Heart left ventricle (tissue), 16 donors: ENCODE measurements at regions of chr9 and their contacts with region 1.

Region 1: DNA sequence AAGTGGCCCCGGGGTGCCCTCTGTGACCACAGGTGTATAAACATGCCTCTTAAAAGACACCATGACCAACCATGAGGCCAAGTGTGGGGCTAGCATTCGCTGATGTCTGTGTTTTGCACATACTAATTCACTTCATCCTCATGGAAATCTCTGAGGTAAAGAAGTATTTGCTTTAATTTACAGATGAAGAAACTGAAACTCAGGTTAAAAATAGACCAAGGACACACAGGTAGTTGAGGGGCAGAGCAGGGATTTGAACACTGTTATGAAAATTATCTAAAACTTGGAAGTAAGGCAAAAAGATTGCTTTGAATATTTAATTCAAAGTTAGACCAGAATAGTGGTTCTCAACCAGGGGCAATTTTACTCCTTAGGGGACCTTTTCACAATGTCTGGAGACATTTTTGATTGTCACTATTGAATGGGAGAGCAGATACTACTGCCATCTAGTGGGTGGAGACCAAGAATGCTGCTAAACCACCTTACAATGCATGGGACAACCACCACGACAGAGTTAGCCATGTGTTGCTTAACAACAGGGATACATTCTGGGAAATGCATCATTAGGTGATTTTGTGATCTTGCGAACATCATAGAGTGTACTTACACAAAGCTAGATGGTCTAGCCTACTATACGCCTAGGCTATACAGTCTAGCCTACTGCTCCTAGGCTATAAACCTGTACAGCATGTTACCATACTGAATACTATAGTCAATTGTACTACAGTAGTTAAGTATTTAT is 8.0 kb upstream of the FXN start:
- DNase-seq: no peak
- ATAC-seq: peak in 3 of 4 donors; percentile 76 to 82 (median 82)
- H3K4me3 ChIP-seq: no peak overlapping the region
- H3K27ac ChIP-seq: no peak overlapping the region
- H3K4me1 ChIP-seq: peaks cover 0 to 20% (median 0%) of the 10 kb centered on the region in 12 donors
- H3K27me3 ChIP-seq: no peaks in the 10 kb centered on the region
- CTCF ChIP-seq: peak; percentile 68 to 87 (median 76)
- POLR2A ChIP-seq: no peak

Region 2: DNA sequence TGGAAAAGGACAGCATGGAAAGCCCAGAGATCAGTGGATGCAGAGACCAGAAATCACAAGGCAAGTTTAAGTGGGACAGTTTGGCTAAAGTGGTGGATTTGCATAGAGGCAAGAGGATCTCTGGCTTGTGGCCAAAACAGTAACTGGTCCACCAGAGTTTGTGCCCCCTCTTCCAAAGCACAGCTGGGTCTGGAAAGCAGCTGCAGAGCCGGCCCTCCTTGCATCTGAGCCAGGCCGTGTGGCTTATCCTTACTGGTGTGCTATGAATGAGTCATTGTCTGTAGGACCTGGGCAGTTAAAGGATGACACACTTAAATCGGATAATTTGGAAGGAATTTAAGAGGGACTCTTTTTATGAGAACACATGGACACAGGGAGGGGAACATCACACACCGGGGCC is 175.9 kb before region 1 on chr9:
- intact Hi-C with region 1: loop called in 1 of 10 experiments (anchors 5 kb)
- DNase-seq: no peak
- ATAC-seq: peak in 3 of 4 donors; percentile 44 to 68 (median 65)
- H3K4me3 ChIP-seq: no peak overlapping the region
- H3K27ac ChIP-seq: no peak overlapping the region
- H3K4me1 ChIP-seq: peaks cover 0 to 15% (median 0%) of the 10 kb centered on the region in 12 donors
- H3K27me3 ChIP-seq: no peaks in the 10 kb centered on the region
- CTCF ChIP-seq: no peak
- POLR2A ChIP-seq: no peak